ENCODE measurements at regions of chr3 and their contacts with region 1.

Region 1: DNA sequence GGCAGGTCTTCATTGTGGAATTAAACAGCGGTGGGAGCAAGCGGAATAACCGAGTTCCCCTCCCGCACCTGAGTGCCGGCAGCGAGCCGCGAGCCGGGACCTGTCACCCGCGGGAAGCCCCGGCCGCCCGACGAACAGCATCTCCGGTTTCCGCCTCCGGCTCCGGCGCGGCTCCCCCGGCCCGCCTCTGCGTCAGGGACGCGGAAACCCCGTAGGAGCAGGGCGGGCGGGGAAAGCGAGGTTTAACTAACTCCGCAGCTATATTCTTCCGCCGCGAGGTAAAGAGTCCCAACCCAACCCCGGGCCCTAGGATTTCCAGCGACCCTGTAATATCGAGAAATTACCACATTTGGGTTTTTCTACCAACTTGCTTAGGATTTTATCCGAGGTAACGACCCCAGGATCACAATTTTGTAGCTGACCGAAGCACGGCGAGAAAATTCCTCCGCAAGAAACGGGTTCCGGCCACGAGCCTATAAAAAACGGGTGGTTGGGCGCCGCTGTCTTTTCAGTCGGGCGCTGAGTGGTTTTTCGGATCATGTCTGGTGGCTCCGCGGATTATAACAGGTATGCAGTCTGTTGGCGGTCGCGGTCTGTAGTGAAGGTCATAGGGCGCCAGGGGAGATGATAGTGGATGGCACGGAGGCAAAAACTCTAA is at the start of gene EIF4A2:
- DNase-seq: peak; percentile 87 to 93 (median 91)
- ATAC-seq: peak; percentile 86
- H3K4me3 ChIP-seq: peak within 1 kb of the TSS; percentile 88
- H3K4me3 Mint-ChIP-seq: peak within 1 kb of the TSS; percentile 95 to 100 (median 99)
- H3K27ac ChIP-seq: peak within 1 kb of the TSS; percentile 97
- H3K27ac Mint-ChIP-seq: peak within 1 kb of the TSS; percentile 96 to 100 (median 99)
- H3K4me1 ChIP-seq: peaks cover 37 to 39% of the 10 kb centered on the region in 2 donors
- H3K4me1 Mint-ChIP-seq: peaks cover 22 to 59% (median 51%) of the 10 kb centered on the region in 7 donors
- H3K27me3 ChIP-seq: no peaks in the 10 kb centered on the region
- H3K27me3 Mint-ChIP-seq: peaks cover 0 to 3% (median 0%) of the 10 kb centered on the region in 5 donors
- total RNA-seq, gene EIF4A2: 401 to 804 (median 650) TPM

Region 2: DNA sequence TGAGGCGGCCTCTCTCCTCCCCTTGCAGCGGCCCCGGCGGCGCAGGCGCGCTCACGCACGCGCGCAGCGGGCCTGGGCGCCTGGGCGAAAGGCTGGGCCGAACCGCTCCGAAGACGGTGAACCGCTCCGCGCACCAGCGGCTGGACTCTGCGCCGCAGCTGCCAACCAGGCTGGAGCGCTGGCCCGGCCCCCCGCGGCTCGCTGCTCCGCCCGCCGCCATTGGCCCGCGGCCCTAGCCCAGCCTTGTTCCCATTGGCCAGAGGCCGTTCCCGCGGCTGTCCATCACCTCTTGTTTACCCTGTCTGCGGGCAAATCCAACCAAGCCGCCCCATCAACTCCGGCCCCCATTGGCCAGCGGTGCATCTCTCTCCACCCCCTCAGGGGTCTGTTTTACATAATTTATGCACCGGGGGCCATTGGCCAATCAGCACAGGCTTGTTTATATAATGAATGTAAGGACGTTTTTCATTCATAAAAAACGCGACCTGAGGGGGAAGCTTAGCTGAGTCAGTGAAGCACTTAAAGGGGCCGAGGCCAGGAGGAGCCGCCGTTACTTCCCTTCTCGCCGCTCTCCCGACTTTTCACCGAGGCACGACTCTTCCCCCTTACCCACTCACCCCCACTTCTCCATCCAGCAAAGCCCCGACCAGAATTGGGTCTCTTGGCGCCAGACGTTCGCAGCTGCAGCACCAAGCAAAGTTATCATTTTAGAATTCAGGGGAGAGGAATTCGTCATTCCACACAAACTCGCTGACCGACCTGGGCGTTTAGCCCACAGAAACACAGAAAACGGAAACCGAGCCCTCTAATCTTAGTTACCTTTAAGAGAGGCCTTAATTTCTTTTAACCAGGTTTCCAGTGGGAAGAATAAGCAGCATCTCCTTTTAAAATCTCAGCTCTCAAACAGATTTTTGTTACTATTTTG is 674.0 kb before region 1 on chr3 and contains the start of gene ETV5:
- CTCF ChIA-PET with region 1: no interaction called
- POLR2A ChIA-PET with region 1: no interaction called
- intact Hi-C with region 1: loop called in 1 of 2 experiments (anchors 5 kb)
- DNase-seq: peak; percentile 65 to 91 (median 79)
- ATAC-seq: peak; percentile 97
- H3K4me3 ChIP-seq: peak within 1 kb of the TSS; percentile 71
- H3K4me3 Mint-ChIP-seq: peak within 1 kb of the TSS; percentile 86 to 97 (median 90)
- H3K27ac ChIP-seq: no peak within 1 kb of the TSS
- H3K27ac Mint-ChIP-seq: peak within 1 kb of the TSS in 5 of 9 donors; percentile 7 to 90 (median 60)
- H3K4me1 ChIP-seq: peaks cover 23 to 35% of the 10 kb centered on the region in 2 donors
- H3K4me1 Mint-ChIP-seq: peaks cover 34 to 38% (median 38%) of the 10 kb centered on the region in 7 donors
- H3K27me3 ChIP-seq: peaks cover 22 to 54% of the 10 kb centered on the region in 2 donors
- H3K27me3 Mint-ChIP-seq: peaks cover 84 to 87% (median 86%) of the 10 kb centered on the region in 5 donors
- total RNA-seq, gene ETV5: 0.56 to 2.3 (median 0.97) TPM in 4 of 5 experiments, not detected in the other

Region 3: GRCh38 chr3:186772701-186773424 is 10.3 kb before region 1 on chr3:
- CTCF ChIA-PET with region 1: interaction called, 7 read pairs
- POLR2A ChIA-PET with region 1: interaction called, 168 read pairs
- intact Hi-C with region 1: loop called (anchors 1 kb)
- DNase-seq: peak; percentile 31 to 65 (median 40)
- ATAC-seq: peak; percentile 92
- H3K4me3 ChIP-seq: peak overlapping the region; percentile 58
- H3K4me3 Mint-ChIP-seq: peak overlapping the region; percentile 82 to 99 (median 94)
- H3K27ac ChIP-seq: peak overlapping the region; percentile 74
- H3K27ac Mint-ChIP-seq: peak overlapping the region; percentile 80 to 97 (median 91)
- H3K4me1 ChIP-seq: peaks cover 0 to 4% of the 10 kb centered on the region in 2 donors
- H3K4me1 Mint-ChIP-seq: peaks cover 3 to 19% (median 16%) of the 10 kb centered on the region in 7 donors
- H3K27me3 ChIP-seq: no peaks in the 10 kb centered on the region
- H3K27me3 Mint-ChIP-seq: peaks cover 0 to 6% (median 0%) of the 10 kb centered on the region in 5 donors

Region 4: GRCh38 chr3:186821429-186822367 is 38.5 kb after region 1 on chr3:
- CTCF ChIA-PET with region 1: interaction called, 3 read pairs
- POLR2A ChIA-PET with region 1: interaction called, 39 read pairs
- intact Hi-C with region 1: no loop called
- DNase-seq: peak in 5 of 9 donors; percentile 37 to 49 (median 45)
- ATAC-seq: peak; percentile 46
- H3K4me3 ChIP-seq: no peak overlapping the region
- H3K4me3 Mint-ChIP-seq: no peak overlapping the region
- H3K27ac ChIP-seq: no peak overlapping the region
- H3K27ac Mint-ChIP-seq: no peak overlapping the region
- H3K4me1 ChIP-seq: peaks cover 6 to 11% of the 10 kb centered on the region in 2 donors
- H3K4me1 Mint-ChIP-seq: peaks cover 9 to 20% (median 12%) of the 10 kb centered on the region in 7 donors
- H3K27me3 ChIP-seq: peaks cover 0 to 14% of the 10 kb centered on the region in 2 donors
- H3K27me3 Mint-ChIP-seq: peaks cover 13 to 23% (median 18%) of the 10 kb centered on the region in 5 donors

Region 5: DNA sequence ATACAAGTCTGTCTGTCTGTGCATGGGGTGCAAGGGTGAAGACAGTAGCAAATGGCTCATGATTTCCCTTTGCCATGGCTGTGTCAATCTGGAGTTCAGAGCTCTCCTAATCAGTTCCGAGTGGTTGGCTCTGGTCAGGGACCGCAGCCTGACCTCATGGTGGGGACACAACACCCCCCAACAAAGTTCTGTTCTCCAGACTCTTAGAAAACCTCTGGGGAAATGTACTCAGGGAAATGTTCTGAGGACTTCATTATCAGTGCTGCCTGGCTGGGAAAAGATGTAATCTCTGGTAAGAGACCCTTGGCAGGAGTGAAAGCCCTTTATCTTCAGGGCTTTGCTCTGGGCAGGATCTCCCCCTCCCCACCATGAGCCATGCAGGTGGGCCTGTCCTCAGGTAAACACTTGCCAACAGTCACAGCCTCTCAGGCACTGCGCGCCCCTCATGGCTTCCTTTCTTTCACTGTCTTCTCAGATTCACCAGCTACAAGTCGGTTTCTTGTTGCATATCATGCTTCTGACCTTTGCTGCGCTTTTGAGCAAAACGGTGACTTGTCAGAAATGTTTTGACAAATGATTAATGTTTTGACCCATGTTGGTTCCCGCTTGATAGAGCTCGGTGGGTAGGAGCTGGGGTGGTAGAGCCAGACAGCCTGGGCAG is 242.6 kb after region 1 on chr3:
- CTCF ChIA-PET with region 1: no interaction called
- POLR2A ChIA-PET with region 1: interaction called, 36 read pairs
- intact Hi-C with region 1: loop called in 1 of 2 experiments (anchors 1 kb)
- DNase-seq: peak in 4 of 9 donors; percentile 35 to 45 (median 41)
- ATAC-seq: peak; percentile 17
- H3K4me3 ChIP-seq: peak overlapping the region; percentile 68
- H3K4me3 Mint-ChIP-seq: peak overlapping the region; percentile 88 to 97 (median 93)
- H3K27ac ChIP-seq: peak overlapping the region; percentile 78
- H3K27ac Mint-ChIP-seq: peak overlapping the region; percentile 86 to 99 (median 92)
- H3K4me1 ChIP-seq: peaks cover 31 to 45% of the 10 kb centered on the region in 2 donors
- H3K4me1 Mint-ChIP-seq: peaks cover 40 to 73% (median 61%) of the 10 kb centered on the region in 7 donors
- H3K27me3 ChIP-seq: no peaks in the 10 kb centered on the region
- H3K27me3 Mint-ChIP-seq: no peaks in the 10 kb centered on the region

Region 6: DNA sequence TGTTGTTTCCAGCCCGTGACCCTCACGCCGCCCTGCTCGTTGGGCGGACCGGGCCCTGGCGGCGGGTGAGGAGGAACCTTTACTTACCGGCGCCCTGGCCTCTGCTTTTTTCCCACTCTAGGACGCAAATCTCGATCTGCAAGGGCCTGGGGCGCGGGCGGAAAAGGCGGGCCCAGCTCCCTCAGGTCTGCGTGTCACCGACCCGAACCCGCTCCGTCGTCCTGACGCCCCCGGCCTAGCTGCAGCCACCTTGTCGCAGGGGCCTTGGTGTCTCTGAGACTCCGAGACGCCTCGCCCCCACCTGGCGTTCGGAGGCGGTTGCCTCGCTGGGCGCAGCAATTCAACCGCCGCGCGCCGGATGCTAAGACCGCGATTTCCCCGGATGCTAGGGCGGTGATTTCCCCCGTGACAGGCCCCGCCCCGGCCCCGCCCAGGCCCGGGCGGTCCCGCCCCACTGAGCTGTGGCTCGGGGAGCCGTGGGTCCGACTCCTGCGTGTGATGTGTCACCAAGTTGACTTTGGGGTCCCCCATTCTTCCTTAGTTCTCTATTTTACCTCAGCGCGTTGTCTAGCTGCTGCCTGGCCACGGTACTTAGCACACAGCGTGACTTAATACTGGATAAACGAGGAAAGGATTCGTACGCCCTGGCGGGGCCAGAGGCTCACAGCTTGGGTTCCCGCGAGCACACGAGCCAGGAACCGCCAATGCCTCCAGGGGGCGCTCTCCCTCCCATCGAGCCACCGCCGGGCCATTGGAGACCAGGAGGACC is 356.1 kb after region 1 on chr3 and contains the start of gene RPL39L:
- CTCF ChIA-PET with region 1: no interaction called
- POLR2A ChIA-PET with region 1: interaction called, 8 read pairs
- intact Hi-C with region 1: loop called in 1 of 2 experiments (anchors 2 kb)
- DNase-seq: peak; percentile 87 to 95 (median 92)
- ATAC-seq: peak; percentile 97
- H3K4me3 ChIP-seq: peak within 1 kb of the TSS; percentile 94
- H3K4me3 Mint-ChIP-seq: peak within 1 kb of the TSS; percentile 80 to 94 (median 89)
- H3K27ac ChIP-seq: peak within 1 kb of the TSS; percentile 76
- H3K27ac Mint-ChIP-seq: peak within 1 kb of the TSS; percentile 86 to 98 (median 94)
- H3K4me1 ChIP-seq: peaks cover 9 to 17% of the 10 kb centered on the region in 2 donors
- H3K4me1 Mint-ChIP-seq: peaks cover 6 to 26% (median 17%) of the 10 kb centered on the region in 7 donors
- H3K27me3 ChIP-seq: no peaks in the 10 kb centered on the region
- H3K27me3 Mint-ChIP-seq: peaks cover 0 to 2% (median 0%) of the 10 kb centered on the region in 5 donors
- total RNA-seq, gene RPL39L: 0.81 to 14.0 (median 2.8) TPM in 4 of 5 experiments, not detected in the other